Activated CD8-positive, alpha-beta T cell treated with anti-CD3 and anti-CD28 coated beads for 36 hours (primary cell): ENCODE measurements at regions of chr9 and their contacts with region 1.

Region 1: GRCh38 chr9:69019808-69020207 is 5.9 kb upstream of the PRKACG start:
- DNase-seq: no peak
- ATAC-seq: peak; percentile 45
- H3K4me3 Mint-ChIP-seq: no peak overlapping the region
- H3K27ac Mint-ChIP-seq: no peak overlapping the region
- H3K4me1 Mint-ChIP-seq: peaks cover 14% of the 10 kb centered on the region
- H3K27me3 Mint-ChIP-seq: peaks cover under 1% of the 10 kb centered on the region
- CTCF ChIP-seq: no peak

Region 2: GRCh38 chr9:68522131-68522530 is 497.7 kb before region 1 on chr9:
- CTCF ChIA-PET with region 1: no interaction called
- POLR2A ChIA-PET with region 1: no interaction called
- intact Hi-C with region 1: no loop called
- DNase-seq: no peak
- ATAC-seq: no peak
- H3K4me3 Mint-ChIP-seq: no peak overlapping the region
- H3K27ac Mint-ChIP-seq: no peak overlapping the region
- H3K4me1 Mint-ChIP-seq: no peaks in the 10 kb centered on the region
- H3K27me3 Mint-ChIP-seq: peaks cover 9% of the 10 kb centered on the region
- CTCF ChIP-seq: no peak

Region 3: DNA sequence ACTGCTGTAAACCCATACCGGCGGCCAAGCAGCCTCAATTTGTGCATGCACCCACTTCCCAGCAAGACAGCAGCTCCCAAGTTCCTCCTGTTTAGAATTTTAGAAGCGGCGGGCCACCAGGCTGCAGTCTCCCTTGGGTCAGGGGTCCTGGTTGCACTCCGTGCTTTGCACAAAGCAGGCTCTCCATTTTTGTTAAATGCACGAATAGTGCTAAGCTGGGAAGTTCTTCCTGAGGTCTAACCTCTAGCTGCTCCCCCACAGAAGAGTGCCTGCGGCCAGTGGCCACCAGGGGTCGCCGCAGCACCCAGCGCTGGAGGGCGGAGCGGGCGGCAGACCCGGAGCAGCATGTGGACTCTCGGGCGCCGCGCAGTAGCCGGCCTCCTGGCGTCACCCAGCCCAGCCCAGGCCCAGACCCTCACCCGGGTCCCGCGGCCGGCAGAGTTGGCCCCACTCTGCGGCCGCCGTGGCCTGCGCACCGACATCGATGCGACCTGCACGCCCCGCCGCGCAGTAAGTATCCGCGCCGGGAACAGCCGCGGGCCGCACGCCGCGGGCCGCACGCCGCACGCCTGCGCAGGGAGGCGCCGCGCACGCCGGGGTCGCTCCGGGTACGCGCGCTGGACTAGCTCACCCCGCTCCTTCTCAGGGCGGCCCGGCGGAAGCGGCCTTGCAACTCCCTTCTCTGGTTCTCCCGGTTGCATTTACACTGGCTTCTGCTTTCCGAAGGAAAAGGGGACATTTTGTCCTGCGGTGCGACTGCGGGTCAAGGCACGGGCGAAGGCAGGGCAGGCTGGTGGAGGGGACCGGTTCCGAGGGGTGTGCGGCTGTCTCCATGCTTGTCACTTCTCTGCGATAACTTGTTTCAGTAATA is 15.9 kb after region 1 on chr9 and contains the start of gene FXN:
- CTCF ChIA-PET with region 1: interaction called, 13 read pairs
- POLR2A ChIA-PET with region 1: interaction called, 7 read pairs
- intact Hi-C with region 1: no loop called
- DNase-seq: peak; percentile 82
- ATAC-seq: peak; percentile 95
- H3K4me3 Mint-ChIP-seq: peak within 1 kb of the TSS; percentile 95
- H3K27ac Mint-ChIP-seq: peak within 1 kb of the TSS; percentile 93
- H3K4me1 Mint-ChIP-seq: peaks cover 22% of the 10 kb centered on the region
- H3K27me3 Mint-ChIP-seq: no peaks in the 10 kb centered on the region
- CTCF ChIP-seq: peak; percentile 98
- total RNA-seq, gene FXN: 21.0 to 21.8 TPM